ENCODE measurements at regions of chr14 and their contacts with region 1.

Region 1: GRCh38 chr14:80954687-80955299 is 628 bp upstream of the TSHR start:
- DNase-seq: peak; percentile 65 to 77 (median 72)
- H3K4me3 ChIP-seq: peak overlapping the region; percentile 72 to 92
- H3K4me3 Mint-ChIP-seq: peak overlapping the region; percentile 77 to 96 (median 88)
- H3K27ac ChIP-seq: no peak overlapping the region
- H3K27ac Mint-ChIP-seq: peak overlapping the region; percentile 12 to 72 (median 60)
- H3K4me1 ChIP-seq: peaks cover 35% of the 10 kb centered on the region
- H3K4me1 Mint-ChIP-seq: peaks cover 27 to 41% (median 33%) of the 10 kb centered on the region in 4 donors
- H3K27me3 ChIP-seq: no peaks in the 10 kb centered on the region
- H3K27me3 Mint-ChIP-seq: no peaks in the 10 kb centered on the region

Region 2: GRCh38 chr14:80973931-80974641 is 19.3 kb after region 1 on chr14:
- CTCF ChIA-PET with region 1: interaction called, 18 read pairs
- POLR2A ChIA-PET with region 1: interaction called, 18 read pairs
- intact Hi-C with region 1: no loop called
- DNase-seq: peak in 4 of 5 donors; percentile 17 to 58 (median 34)
- H3K4me3 ChIP-seq: no peak overlapping the region
- H3K4me3 Mint-ChIP-seq: peak overlapping the region in 2 of 8 donors; percentile 47 to 58
- H3K27ac ChIP-seq: no peak overlapping the region
- H3K27ac Mint-ChIP-seq: peak overlapping the region in 3 of 7 donors; percentile 14 to 84 (median 63)
- H3K4me1 ChIP-seq: peaks cover 21% of the 10 kb centered on the region
- H3K4me1 Mint-ChIP-seq: peaks cover 14 to 29% (median 22%) of the 10 kb centered on the region in 4 donors
- H3K27me3 ChIP-seq: no peaks in the 10 kb centered on the region
- H3K27me3 Mint-ChIP-seq: no peaks in the 10 kb centered on the region

Region 3: DNA sequence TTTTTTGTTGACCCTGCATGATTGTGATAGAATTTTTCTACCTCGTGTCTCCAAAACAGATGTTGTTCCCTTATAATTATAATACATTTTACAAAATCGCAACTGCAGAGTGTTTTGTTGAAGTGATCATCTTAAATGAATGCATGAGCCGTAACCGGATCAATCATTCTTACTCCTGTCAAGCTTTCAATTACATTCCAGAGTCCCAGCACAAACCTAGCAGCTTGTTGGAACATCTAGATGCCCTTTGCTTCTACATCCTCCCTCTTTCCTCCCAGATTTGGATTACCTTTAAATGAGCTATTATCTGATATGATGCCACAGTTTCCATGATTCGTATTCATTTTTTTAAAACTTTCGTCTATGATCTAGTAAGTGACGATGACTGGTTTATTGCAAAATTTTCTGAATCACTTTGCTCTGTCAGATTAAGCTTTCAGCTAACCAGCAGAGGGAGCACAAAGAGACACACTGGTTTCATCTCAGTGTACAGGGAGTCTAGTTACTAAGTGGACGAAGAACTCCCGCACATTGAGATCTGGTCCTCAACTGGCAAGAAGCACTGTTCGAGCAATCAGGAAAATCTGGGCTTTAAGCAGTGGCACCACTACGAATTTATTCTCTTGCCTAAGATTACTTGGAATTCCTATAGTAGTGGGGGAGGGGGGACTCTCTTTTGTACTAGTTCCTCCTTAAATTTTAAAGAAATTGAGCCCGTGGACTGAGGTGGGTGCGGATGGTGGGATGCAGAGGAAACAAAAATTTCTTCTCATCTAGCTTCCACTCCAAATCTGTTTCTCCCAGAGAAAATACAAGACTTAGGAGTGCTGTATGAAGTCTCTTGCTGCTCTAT is 41.5 kb after region 1 on chr14:
- CTCF ChIA-PET with region 1: interaction called, 12 read pairs
- POLR2A ChIA-PET with region 1: no interaction called
- intact Hi-C with region 1: no loop called
- DNase-seq: peak; percentile 38 to 47 (median 44)
- H3K4me3 ChIP-seq: no peak overlapping the region
- H3K4me3 Mint-ChIP-seq: no peak overlapping the region
- H3K27ac ChIP-seq: no peak overlapping the region
- H3K27ac Mint-ChIP-seq: peak overlapping the region in 1 of 7 donors; percentile 0
- H3K4me1 ChIP-seq: no peaks in the 10 kb centered on the region
- H3K4me1 Mint-ChIP-seq: peaks cover 3 to 9% (median 6%) of the 10 kb centered on the region in 4 donors
- H3K27me3 ChIP-seq: no peaks in the 10 kb centered on the region
- H3K27me3 Mint-ChIP-seq: peaks cover 14 to 15% of the 10 kb centered on the region in 2 donors

Region 4: DNA sequence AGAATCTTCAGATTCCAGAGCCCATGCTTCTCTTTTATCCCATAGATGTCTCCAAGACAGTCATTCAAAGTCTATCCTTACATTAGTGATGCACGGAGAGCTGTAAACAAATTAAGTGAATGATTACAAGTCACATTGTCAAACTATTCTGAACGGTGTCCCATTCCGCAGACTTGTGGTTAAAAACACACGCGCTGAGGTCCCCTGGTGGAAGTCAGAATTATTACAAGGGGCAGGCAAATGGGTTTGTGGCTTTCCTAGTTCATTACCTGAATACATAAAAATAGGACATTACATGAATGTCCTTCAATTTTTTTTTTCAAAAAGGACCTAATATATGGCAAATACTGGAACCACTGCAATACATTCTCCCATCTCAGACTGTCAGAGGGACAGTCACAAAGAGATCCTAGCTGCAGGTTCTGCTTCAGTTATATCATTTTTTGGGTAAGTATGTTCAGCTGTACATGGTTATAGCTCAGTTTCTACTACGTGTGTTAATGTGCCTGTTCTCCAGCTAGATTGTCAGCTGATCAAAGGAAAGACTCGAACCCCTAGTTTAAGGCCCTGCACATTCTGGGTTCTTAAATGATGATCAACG is 498.5 kb after region 1 on chr14:
- CTCF ChIA-PET with region 1: interaction called, 5 read pairs
- POLR2A ChIA-PET with region 1: no interaction called
- intact Hi-C with region 1: loop called (anchors 1 kb)
- DNase-seq: peak in 4 of 5 donors; percentile 39 to 46 (median 42)
- H3K4me3 ChIP-seq: no peak overlapping the region
- H3K4me3 Mint-ChIP-seq: no peak overlapping the region
- H3K27ac ChIP-seq: no peak overlapping the region
- H3K27ac Mint-ChIP-seq: no peak overlapping the region
- H3K4me1 ChIP-seq: no peaks in the 10 kb centered on the region
- H3K4me1 Mint-ChIP-seq: peaks cover 0 to 4% (median 3%) of the 10 kb centered on the region in 4 donors
- H3K27me3 ChIP-seq: no peaks in the 10 kb centered on the region
- H3K27me3 Mint-ChIP-seq: peaks cover 5 to 14% of the 10 kb centered on the region in 2 donors